ENCODE measurements at regions of chr9 and their contacts with region 1.

Region 1: GRCh38 chr9:68584189-68585033 is 43.7 kb upstream of the TMEM252 start:
- DNase-seq: peak; percentile 71 to 94
- ATAC-seq: peak; percentile 100
- H3K4me3 ChIP-seq: no peak overlapping the region
- H3K4me3 Mint-ChIP-seq: no peak overlapping the region
- H3K27ac ChIP-seq: no peak overlapping the region
- H3K27ac Mint-ChIP-seq: no peak overlapping the region
- H3K4me1 ChIP-seq: no peaks in the 10 kb centered on the region
- H3K4me1 Mint-ChIP-seq: no peaks in the 10 kb centered on the region
- H3K27me3 ChIP-seq: no peaks in the 10 kb centered on the region
- H3K27me3 Mint-ChIP-seq: peaks cover 0 to 9% of the 10 kb centered on the region in 2 donors
- CTCF ChIP-seq: peak; percentile 100

Region 2: GRCh38 chr9:68999393-69000105 is 415.1 kb after region 1 on chr9:
- intact Hi-C with region 1: loop called (anchors 1 kb)
- DNase-seq: peak; percentile 28 to 82
- ATAC-seq: peak; percentile 83 to 85 (median 84)
- H3K4me3 ChIP-seq: no peak overlapping the region
- H3K4me3 Mint-ChIP-seq: no peak overlapping the region
- H3K27ac ChIP-seq: no peak overlapping the region
- H3K27ac Mint-ChIP-seq: peak overlapping the region; percentile 26 to 30
- H3K4me1 ChIP-seq: peaks cover 15% of the 10 kb centered on the region
- H3K4me1 Mint-ChIP-seq: peaks cover 30% of the 10 kb centered on the region in 2 donors
- H3K27me3 ChIP-seq: no peaks in the 10 kb centered on the region
- H3K27me3 Mint-ChIP-seq: peaks cover 0 to 3% of the 10 kb centered on the region in 2 donors
- CTCF ChIP-seq: peak; percentile 78

Region 3: GRCh38 chr9:69027355-69028096 is 443.1 kb after region 1 on chr9:
- intact Hi-C with region 1: loop called (anchors 1 kb)
- DNase-seq: peak in 1 of 2 donors; percentile 79
- ATAC-seq: peak; percentile 85 to 91 (median 87)
- H3K4me3 ChIP-seq: no peak overlapping the region
- H3K4me3 Mint-ChIP-seq: no peak overlapping the region
- H3K27ac ChIP-seq: no peak overlapping the region
- H3K27ac Mint-ChIP-seq: peak overlapping the region; percentile 32 to 37
- H3K4me1 ChIP-seq: peaks cover 19% of the 10 kb centered on the region
- H3K4me1 Mint-ChIP-seq: peaks cover 36 to 38% of the 10 kb centered on the region in 2 donors
- H3K27me3 ChIP-seq: no peaks in the 10 kb centered on the region
- H3K27me3 Mint-ChIP-seq: no peaks in the 10 kb centered on the region
- CTCF ChIP-seq: peak; percentile 87

Measured in natural killer cell (primary cell).